ENCODE measurements at regions of chr12 and their contacts with region 1.

Region 1: DNA sequence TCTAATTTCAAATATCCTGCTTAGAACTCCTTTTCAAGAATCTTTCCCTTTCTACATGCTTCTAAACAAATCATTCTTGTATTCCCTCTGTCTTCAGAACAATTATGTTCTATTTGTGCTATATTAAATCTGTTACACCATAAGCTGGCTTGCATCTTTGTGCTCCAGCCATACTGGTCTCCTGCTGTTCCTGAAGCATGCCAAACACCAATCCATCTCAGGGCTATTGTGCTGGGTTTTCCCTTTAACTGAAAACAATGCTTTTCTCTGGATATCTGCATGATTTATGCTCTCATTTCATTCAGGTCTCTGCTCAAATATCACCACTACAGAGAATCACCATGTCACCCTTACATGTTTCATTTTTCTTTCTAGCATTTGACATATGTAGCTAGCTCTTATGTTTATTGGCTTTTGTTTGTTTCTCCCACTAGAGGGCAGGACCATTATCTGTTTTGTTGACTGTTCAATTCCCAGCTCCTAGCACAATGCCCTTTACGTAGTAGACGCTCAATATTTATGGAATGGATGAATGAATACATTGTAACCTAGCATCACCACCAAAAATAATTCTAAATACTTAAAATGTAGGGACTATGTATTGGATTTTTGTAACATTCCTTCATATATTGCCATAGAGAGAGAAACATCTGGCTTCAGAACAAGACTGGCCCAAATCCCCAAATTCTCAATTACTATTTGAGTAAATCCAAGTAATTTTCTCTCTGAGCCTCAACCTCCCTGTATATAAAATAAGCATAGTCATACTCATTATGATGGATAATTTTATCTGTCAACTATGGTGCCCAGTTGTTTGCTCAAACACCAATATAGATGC is 302.0 kb upstream of the SYT1 start:
- DNase-seq: peak; percentile 47
- H3K4me3 Mint-ChIP-seq: no peak overlapping the region
- H3K27ac Mint-ChIP-seq: no peak overlapping the region
- H3K4me1 Mint-ChIP-seq: peaks cover 6% of the 10 kb centered on the region
- H3K27me3 Mint-ChIP-seq: no peaks in the 10 kb centered on the region
- CTCF ChIP-seq: peak; percentile 32

Region 2: GRCh38 chr12:78315028-78315427 is 247.6 kb before region 1 on chr12:
- CTCF ChIA-PET with region 1: no interaction called
- POLR2A ChIA-PET with region 1: no interaction called
- intact Hi-C with region 1: no loop called
- DNase-seq: no peak
- H3K4me3 Mint-ChIP-seq: no peak overlapping the region
- H3K27ac Mint-ChIP-seq: no peak overlapping the region
- H3K4me1 Mint-ChIP-seq: no peaks in the 10 kb centered on the region
- H3K27me3 Mint-ChIP-seq: no peaks in the 10 kb centered on the region
- CTCF ChIP-seq: no peak

Region 3: DNA sequence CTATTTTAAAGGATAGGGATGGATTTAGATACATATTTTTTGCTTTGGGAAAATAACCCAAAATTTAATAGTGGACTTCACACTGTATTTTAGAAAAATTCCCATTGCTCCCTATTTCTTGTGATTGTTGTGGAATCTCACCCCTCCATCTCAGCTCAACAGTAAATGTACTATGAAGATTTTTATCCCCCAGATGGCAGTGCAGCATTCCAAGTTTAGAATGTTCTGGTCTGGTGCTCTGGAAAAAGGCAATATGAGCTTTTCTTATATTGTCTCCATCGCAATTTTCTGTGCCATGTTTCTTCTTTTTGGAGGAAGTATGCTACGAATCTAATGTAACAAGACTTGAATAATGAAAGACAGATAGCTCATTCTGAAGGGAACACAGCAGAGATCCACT is 169.7 kb before region 1 on chr12:
- CTCF ChIA-PET with region 1: no interaction called
- POLR2A ChIA-PET with region 1: no interaction called
- intact Hi-C with region 1: loop called (anchors 10 kb)
- DNase-seq: peak; percentile 38
- H3K4me3 Mint-ChIP-seq: no peak overlapping the region
- H3K27ac Mint-ChIP-seq: no peak overlapping the region
- H3K4me1 Mint-ChIP-seq: no peaks in the 10 kb centered on the region
- H3K27me3 Mint-ChIP-seq: no peaks in the 10 kb centered on the region
- CTCF ChIP-seq: peak; percentile 19

Region 4: DNA sequence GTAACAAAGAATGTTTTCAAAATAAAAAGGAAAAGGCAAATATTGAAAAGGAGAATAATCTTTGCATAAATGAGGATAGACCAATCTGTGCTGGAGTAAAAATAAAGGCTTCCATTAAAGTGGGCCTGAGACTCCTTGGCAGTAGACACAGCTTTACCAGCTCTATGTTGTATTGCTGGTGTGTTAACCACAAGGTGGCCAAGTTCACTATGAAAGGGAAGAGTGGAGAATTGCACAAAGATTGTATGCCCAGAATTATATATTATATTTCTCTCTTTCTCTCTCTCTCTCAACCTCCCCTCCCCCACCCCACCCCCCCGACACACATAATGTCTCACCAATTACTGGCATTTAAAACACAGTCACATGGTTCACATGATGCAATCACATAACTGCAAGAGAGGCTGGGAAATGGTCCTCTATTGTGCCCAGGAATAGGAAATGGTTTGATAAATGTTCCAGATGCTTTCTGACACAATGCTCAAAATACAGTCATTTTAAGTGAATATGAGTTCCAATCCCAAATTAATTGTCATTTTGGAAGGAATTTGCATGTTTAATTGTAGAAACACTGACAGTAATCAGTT is 79.3 kb after region 1 on chr12:
- CTCF ChIA-PET with region 1: no interaction called
- POLR2A ChIA-PET with region 1: no interaction called
- intact Hi-C with region 1: no loop called
- DNase-seq: peak; percentile 14
- H3K4me3 Mint-ChIP-seq: no peak overlapping the region
- H3K27ac Mint-ChIP-seq: no peak overlapping the region
- H3K4me1 Mint-ChIP-seq: peaks cover 7% of the 10 kb centered on the region
- H3K27me3 Mint-ChIP-seq: no peaks in the 10 kb centered on the region
- CTCF ChIP-seq: no peak

Region 5: GRCh38 chr12:78778339-78778738 is 215.8 kb after region 1 on chr12:
- CTCF ChIA-PET with region 1: no interaction called
- POLR2A ChIA-PET with region 1: no interaction called
- intact Hi-C with region 1: no loop called
- DNase-seq: peak; percentile 51
- H3K4me3 Mint-ChIP-seq: no peak overlapping the region
- H3K27ac Mint-ChIP-seq: peak overlapping the region; percentile 21
- H3K4me1 Mint-ChIP-seq: peaks cover 7% of the 10 kb centered on the region
- H3K27me3 Mint-ChIP-seq: no peaks in the 10 kb centered on the region
- CTCF ChIP-seq: no peak

Region 6: GRCh38 chr12:78863482-78864402 is 301.2 kb after region 1 on chr12:
- CTCF ChIA-PET with region 1: interaction called, 3 read pairs
- POLR2A ChIA-PET with region 1: no interaction called
- intact Hi-C with region 1: loop called (anchors 2 kb)
- DNase-seq: peak; percentile 72
- H3K4me3 Mint-ChIP-seq: peak overlapping the region; percentile 96
- H3K27ac Mint-ChIP-seq: peak overlapping the region; percentile 85
- H3K4me1 Mint-ChIP-seq: peaks cover 8% of the 10 kb centered on the region
- H3K27me3 Mint-ChIP-seq: no peaks in the 10 kb centered on the region
- CTCF ChIP-seq: no peak

Region 7: GRCh38 chr12:79174626-79175025 is 612.0 kb after region 1 on chr12:
- CTCF ChIA-PET with region 1: interaction called, 13 read pairs
- POLR2A ChIA-PET with region 1: no interaction called
- intact Hi-C with region 1: loop called (anchors 2 kb)
- DNase-seq: peak; percentile 50
- H3K4me3 Mint-ChIP-seq: no peak overlapping the region
- H3K27ac Mint-ChIP-seq: no peak overlapping the region
- H3K4me1 Mint-ChIP-seq: no peaks in the 10 kb centered on the region
- H3K27me3 Mint-ChIP-seq: no peaks in the 10 kb centered on the region
- CTCF ChIP-seq: peak; percentile 49

Measured in MCF 10A (cell line).